HAP-1 (cell line): ENCODE measurements at regions of chr12 and their contacts with region 1.

Region 1: GRCh38 chr12:553205-554000 is 93.7 kb downstream of the B4GALNT3 start:
- DNase-seq: no peak
- H3K4me3 ChIP-seq: no peak overlapping the region
- H3K4me1 ChIP-seq: no peaks in the 10 kb centered on the region
- H3K27me3 ChIP-seq: no peaks in the 10 kb centered on the region

Region 2: DNA sequence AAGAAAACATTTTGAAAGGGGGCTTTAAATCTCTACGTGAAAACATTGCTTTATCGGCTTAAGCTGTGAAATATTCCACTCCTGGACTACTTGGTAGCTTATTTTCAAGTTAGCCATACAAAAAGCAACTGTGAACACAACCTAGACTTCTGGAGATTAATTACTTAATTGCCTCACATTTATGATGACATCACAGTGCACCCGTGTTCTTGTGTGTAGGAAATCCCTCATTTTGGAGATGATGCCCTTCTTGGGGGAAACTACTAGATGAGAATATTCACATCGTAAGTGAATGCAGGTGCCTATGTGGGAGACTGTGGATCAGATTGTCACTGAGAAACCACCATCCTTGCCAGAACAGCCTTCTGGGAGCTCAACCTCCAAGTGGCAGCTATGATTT is 104.2 kb before region 1 on chr12:
- in situ Hi-C with region 1: loop called (anchors 5 kb)
- DNase-seq: no peak
- H3K4me3 ChIP-seq: no peak overlapping the region
- H3K4me1 ChIP-seq: no peaks in the 10 kb centered on the region
- H3K27me3 ChIP-seq: no peaks in the 10 kb centered on the region

Region 3: GRCh38 chr12:468671-469389 is 84.6 kb before region 1 on chr12:
- in situ Hi-C with region 1: no loop called
- DNase-seq: no peak
- H3K4me3 ChIP-seq: no peak overlapping the region
- H3K4me1 ChIP-seq: no peaks in the 10 kb centered on the region
- H3K27me3 ChIP-seq: no peaks in the 10 kb centered on the region